Thyroid gland (tissue), 4 donors: ENCODE measurements at regions of chr3 and their contacts with region 1.

Region 1: GRCh38 chr3:39288300-39288808 is 8.5 kb upstream of the CX3CR1 start:
- DNase-seq: peak; percentile 95 to 96
- H3K4me3 ChIP-seq: no peak overlapping the region
- H3K27ac ChIP-seq: peak overlapping the region in 1 of 3 donors; percentile 17
- H3K4me1 ChIP-seq: peaks cover 0 to 13% of the 10 kb centered on the region in 2 donors
- H3K27me3 ChIP-seq: no peaks in the 10 kb centered on the region
- CTCF ChIP-seq: peak; percentile 39 to 98 (median 94)
- POLR2A ChIP-seq: peak in 1 of 2 donors; percentile 32

Region 2: GRCh38 chr3:39126532-39127071 is 161.8 kb before region 1 on chr3:
- intact Hi-C with region 1: loop called (anchors 5 kb)
- DNase-seq: peak; percentile 50 to 54
- H3K4me3 ChIP-seq: no peak overlapping the region
- H3K27ac ChIP-seq: no peak overlapping the region
- H3K4me1 ChIP-seq: no peaks in the 10 kb centered on the region
- H3K27me3 ChIP-seq: no peaks in the 10 kb centered on the region
- CTCF ChIP-seq: peak in 4 of 6 experiments; percentile 58 to 67 (median 58)
- POLR2A ChIP-seq: no peak

Region 3: DNA sequence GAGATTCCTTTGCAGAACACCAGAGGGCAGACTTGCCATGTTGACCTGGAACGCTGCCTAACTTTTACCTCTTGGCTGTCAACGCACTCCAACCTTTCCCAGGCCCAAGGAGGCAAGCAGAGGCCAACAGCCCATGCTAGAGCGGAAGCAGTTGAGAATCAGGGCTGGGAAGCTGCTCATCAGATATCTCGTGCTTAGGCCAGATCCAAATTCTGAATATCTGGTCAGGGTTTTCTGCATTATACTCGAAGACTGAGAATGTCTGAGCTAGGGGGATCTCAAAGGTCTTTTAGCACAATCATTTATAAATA is 98.4 kb before region 1 on chr3:
- intact Hi-C with region 1: loop called (anchors 2 kb)
- DNase-seq: peak; percentile 78 to 83
- H3K4me3 ChIP-seq: no peak overlapping the region
- H3K27ac ChIP-seq: no peak overlapping the region
- H3K4me1 ChIP-seq: peaks cover 0 to 14% of the 10 kb centered on the region in 2 donors
- H3K27me3 ChIP-seq: no peaks in the 10 kb centered on the region
- CTCF ChIP-seq: peak in 5 of 6 experiments; percentile 67 to 89 (median 86)
- POLR2A ChIP-seq: no peak

Region 4: GRCh38 chr3:39208463-39209055 is 79.8 kb before region 1 on chr3:
- intact Hi-C with region 1: loop called (anchors 5 kb)
- DNase-seq: peak; percentile 45 to 51
- H3K4me3 ChIP-seq: no peak overlapping the region
- H3K27ac ChIP-seq: no peak overlapping the region
- H3K4me1 ChIP-seq: no peaks in the 10 kb centered on the region
- H3K27me3 ChIP-seq: no peaks in the 10 kb centered on the region
- CTCF ChIP-seq: peak in 4 of 6 experiments; percentile 27 to 64 (median 47)
- POLR2A ChIP-seq: no peak

Region 5: DNA sequence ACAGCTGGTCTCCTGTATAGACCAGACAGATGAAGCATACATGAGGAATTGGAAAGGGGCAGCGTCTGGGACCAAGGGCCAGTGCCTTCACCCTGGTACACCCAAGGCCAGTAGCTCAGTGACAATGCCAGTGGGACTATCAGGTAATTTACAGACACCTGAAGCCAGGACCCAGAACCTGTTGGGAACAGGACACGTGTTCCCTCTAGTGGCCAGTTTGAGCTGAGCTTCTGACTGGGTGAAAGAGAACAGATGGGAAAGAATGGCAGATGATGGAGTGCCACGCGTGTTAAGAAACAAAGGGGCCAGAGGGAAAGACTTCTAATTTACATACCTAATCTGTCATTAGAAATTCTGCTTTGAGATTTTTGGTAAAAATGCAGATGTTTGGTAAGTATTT is 89.7 kb after region 1 on chr3:
- intact Hi-C with region 1: loop called (anchors 5 kb)
- DNase-seq: peak; percentile 74 to 75
- H3K4me3 ChIP-seq: no peak overlapping the region
- H3K27ac ChIP-seq: no peak overlapping the region
- H3K4me1 ChIP-seq: peaks cover 5 to 8% of the 10 kb centered on the region in 2 donors
- H3K27me3 ChIP-seq: no peaks in the 10 kb centered on the region
- CTCF ChIP-seq: peak in 5 of 6 experiments; percentile 64 to 81 (median 80)
- POLR2A ChIP-seq: no peak

Region 6: DNA sequence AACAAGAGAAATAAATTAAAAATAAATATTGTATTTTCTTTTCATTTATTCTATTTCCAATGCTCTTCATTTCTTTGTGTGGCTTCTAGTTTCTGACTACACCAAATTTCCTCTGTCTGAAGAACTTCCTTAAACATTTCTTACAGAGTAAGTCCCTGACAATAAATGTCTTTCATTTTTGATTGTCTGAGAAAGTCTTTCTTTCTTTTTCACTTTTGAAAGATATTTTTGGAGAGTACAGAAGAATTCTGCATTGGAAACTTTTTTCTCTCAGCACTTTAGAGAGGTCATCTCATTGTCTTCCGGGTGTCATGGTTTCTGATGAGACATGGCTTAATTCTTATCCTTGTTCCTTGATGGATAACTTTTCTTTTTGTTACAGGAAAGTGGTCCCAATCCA is 298.8 kb after region 1 on chr3:
- intact Hi-C with region 1: no loop called
- DNase-seq: no peak
- H3K4me3 ChIP-seq: no peak overlapping the region
- H3K27ac ChIP-seq: no peak overlapping the region
- H3K4me1 ChIP-seq: no peaks in the 10 kb centered on the region
- H3K27me3 ChIP-seq: no peaks in the 10 kb centered on the region
- CTCF ChIP-seq: no peak
- POLR2A ChIP-seq: no peak